CD4-positive, alpha-beta T cell (primary cell): ENCODE measurements at regions of chr1 and their contacts with region 1.

Region 1: DNA sequence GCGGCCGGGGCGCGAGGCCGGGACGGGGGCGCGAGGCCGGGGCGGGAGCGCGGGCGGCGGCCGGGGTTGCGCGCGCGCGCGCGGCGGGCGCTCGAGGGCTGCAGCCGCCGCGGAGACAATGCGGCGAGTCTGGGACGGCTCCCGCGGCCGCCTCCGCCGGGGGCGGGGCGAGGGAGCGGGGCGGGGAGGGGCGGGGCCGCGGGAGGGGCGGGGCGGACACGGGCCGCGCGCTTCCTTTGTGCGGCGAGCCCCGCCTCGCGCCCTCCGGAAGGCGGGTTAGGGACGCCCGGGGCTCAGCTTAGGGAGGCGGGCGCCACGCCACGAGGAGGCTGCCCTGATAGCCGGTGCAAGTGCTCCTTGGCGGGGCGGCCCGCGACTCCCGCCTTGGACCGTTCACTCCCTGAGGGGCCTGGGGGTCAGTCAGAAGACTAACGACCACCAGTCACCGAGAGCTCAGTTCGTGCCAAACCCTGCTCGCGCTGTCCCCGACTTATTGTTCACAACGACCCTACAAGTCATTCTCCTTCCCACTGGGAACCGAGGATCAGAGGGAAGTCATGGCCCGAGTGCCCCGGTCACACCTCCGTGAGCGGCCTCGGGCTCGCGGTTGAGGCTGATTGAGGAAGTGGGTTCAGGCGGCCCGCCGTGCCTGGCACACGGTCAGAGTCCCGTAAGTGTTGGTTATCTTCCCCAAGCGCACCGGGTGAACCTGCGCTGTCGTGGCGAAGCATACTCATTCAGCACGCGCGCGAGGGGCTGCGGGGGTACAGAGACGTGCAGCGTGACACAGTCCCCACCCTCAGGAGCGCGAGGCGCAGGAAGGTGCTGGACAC is 29.1 kb upstream of the A3GALT2 start:
- DNase-seq: peak; percentile 53 to 92 (median 74)
- ATAC-seq: peak; percentile 86
- H3K4me3 ChIP-seq: peak overlapping the region; percentile 90
- H3K4me3 Mint-ChIP-seq: peak overlapping the region; percentile 87
- H3K27ac ChIP-seq: peak overlapping the region in 1 of 2 donors; percentile 56
- H3K27ac Mint-ChIP-seq: peak overlapping the region; percentile 84
- H3K4me1 ChIP-seq: peaks cover 30% of the 10 kb centered on the region
- H3K4me1 Mint-ChIP-seq: peaks cover 46% of the 10 kb centered on the region
- H3K27me3 ChIP-seq: no peaks in the 10 kb centered on the region
- H3K27me3 Mint-ChIP-seq: no peaks in the 10 kb centered on the region
- CTCF ChIP-seq: no peak

Region 2: GRCh38 chr1:33181921-33182341 is 168.1 kb before region 1 on chr1 and contains the start of gene TRIM62:
- CTCF ChIA-PET with region 1: no interaction called
- POLR2A ChIA-PET with region 1: interaction called, 9 read pairs
- intact Hi-C with region 1: loop called in 1 of 2 experiments (anchors 2 kb)
- DNase-seq: peak; percentile 60 to 89 (median 72)
- ATAC-seq: peak; percentile 71
- H3K4me3 ChIP-seq: peak within 1 kb of the TSS; percentile 88
- H3K4me3 Mint-ChIP-seq: peak within 1 kb of the TSS; percentile 93
- H3K27ac ChIP-seq: peak within 1 kb of the TSS in 1 of 2 donors; percentile 30
- H3K27ac Mint-ChIP-seq: peak within 1 kb of the TSS; percentile 62
- H3K4me1 ChIP-seq: peaks cover 23% of the 10 kb centered on the region
- H3K4me1 Mint-ChIP-seq: peaks cover 34% of the 10 kb centered on the region
- H3K27me3 ChIP-seq: peaks cover 0 to 3% of the 10 kb centered on the region in 2 experiments
- H3K27me3 Mint-ChIP-seq: no peaks in the 10 kb centered on the region
- CTCF ChIP-seq: no peak
- total RNA-seq, gene TRIM62: 18.9 to 23.0 TPM

Region 3: DNA sequence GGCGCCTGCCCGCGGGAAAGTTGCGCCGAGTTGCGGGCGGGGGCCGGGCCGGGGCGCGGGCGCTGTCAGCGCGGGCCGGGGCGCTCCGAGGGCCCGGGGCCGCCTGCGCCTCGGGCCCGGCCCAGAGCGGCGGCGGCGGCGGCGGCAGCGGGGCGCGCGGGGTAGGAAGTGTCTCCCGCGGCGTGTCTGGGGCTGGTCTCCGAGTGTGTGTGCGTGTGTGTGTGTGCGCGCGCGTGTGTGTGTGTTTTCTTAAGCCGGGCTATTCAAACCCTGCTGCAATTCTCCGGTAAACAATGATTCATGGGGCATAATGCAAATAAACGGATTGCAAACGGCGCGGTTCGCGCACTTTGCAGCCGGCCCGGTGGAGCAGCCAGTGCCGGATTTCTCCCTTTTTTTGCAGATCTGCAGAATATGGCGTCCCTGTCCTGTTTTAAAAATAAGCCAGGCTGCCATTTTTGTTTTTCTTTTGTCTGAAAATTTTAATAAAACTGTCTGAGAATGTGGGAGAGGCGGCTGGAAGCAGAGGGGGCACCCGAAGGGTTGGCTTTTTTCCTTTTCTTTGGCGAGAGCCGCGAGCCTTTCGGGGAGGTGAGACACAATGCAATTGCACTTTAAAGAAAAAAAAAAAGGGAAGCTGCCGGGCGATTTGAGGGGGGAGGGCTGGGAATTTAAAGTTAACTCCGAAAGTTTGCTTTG is 93.1 kb before region 1 on chr1:
- CTCF ChIA-PET with region 1: no interaction called
- POLR2A ChIA-PET with region 1: no interaction called
- intact Hi-C with region 1: loop called in 1 of 2 experiments (anchors 2 kb)
- DNase-seq: peak; percentile 35 to 79 (median 52)
- ATAC-seq: peak; percentile 68
- H3K4me3 ChIP-seq: peak overlapping the region; percentile 84
- H3K4me3 Mint-ChIP-seq: peak overlapping the region; percentile 97
- H3K27ac ChIP-seq: peak overlapping the region in 1 of 2 donors; percentile 49
- H3K27ac Mint-ChIP-seq: peak overlapping the region; percentile 98
- H3K4me1 ChIP-seq: peaks cover 49% of the 10 kb centered on the region
- H3K4me1 Mint-ChIP-seq: peaks cover 41% of the 10 kb centered on the region
- H3K27me3 ChIP-seq: no peaks in the 10 kb centered on the region
- H3K27me3 Mint-ChIP-seq: no peaks in the 10 kb centered on the region
- CTCF ChIP-seq: no peak

Region 4: GRCh38 chr1:33280091-33280661 is 69.8 kb before region 1 on chr1:
- CTCF ChIA-PET with region 1: no interaction called
- POLR2A ChIA-PET with region 1: no interaction called
- intact Hi-C with region 1: no loop called
- DNase-seq: no peak
- ATAC-seq: no peak
- H3K4me3 ChIP-seq: no peak overlapping the region
- H3K4me3 Mint-ChIP-seq: no peak overlapping the region
- H3K27ac ChIP-seq: no peak overlapping the region
- H3K27ac Mint-ChIP-seq: no peak overlapping the region
- H3K4me1 ChIP-seq: no peaks in the 10 kb centered on the region
- H3K4me1 Mint-ChIP-seq: no peaks in the 10 kb centered on the region
- H3K27me3 ChIP-seq: no peaks in the 10 kb centered on the region
- H3K27me3 Mint-ChIP-seq: no peaks in the 10 kb centered on the region
- CTCF ChIP-seq: no peak

Region 5: GRCh38 chr1:33295450-33296081 is 54.4 kb before region 1 on chr1:
- CTCF ChIA-PET with region 1: no interaction called
- POLR2A ChIA-PET with region 1: interaction called, 11 read pairs
- intact Hi-C with region 1: no loop called
- DNase-seq: peak; percentile 74 to 91 (median 86)
- ATAC-seq: peak; percentile 93
- H3K4me3 ChIP-seq: no peak overlapping the region
- H3K4me3 Mint-ChIP-seq: no peak overlapping the region
- H3K27ac ChIP-seq: no peak overlapping the region
- H3K27ac Mint-ChIP-seq: peak overlapping the region; percentile 58
- H3K4me1 ChIP-seq: peaks cover 15% of the 10 kb centered on the region
- H3K4me1 Mint-ChIP-seq: peaks cover 23% of the 10 kb centered on the region
- H3K27me3 ChIP-seq: no peaks in the 10 kb centered on the region
- H3K27me3 Mint-ChIP-seq: no peaks in the 10 kb centered on the region
- CTCF ChIP-seq: peak; percentile 93

Region 6: DNA sequence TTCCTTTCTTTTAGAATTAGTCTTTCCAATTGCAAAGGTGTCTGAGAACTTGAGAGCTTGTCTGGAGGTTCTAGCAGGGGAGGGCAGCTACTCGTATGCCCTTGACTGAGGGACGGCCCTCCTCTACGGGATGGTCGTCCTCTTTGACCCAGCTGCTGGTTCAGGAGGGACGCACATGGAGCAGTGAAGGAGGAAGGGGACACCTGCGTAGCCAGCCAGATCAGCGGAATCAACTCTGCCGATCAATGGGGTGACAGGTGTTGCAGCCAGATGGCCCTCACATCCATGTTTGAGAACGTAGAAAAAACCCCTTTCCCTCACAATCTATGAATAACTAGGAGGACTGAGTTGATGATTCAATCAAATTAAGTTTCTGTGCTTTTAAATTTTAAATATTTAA is 13.4 kb before region 1 on chr1:
- CTCF ChIA-PET with region 1: no interaction called
- POLR2A ChIA-PET with region 1: interaction called, 10 read pairs
- intact Hi-C with region 1: no loop called
- DNase-seq: no peak
- ATAC-seq: no peak
- H3K4me3 ChIP-seq: no peak overlapping the region
- H3K4me3 Mint-ChIP-seq: no peak overlapping the region
- H3K27ac ChIP-seq: no peak overlapping the region
- H3K27ac Mint-ChIP-seq: no peak overlapping the region
- H3K4me1 ChIP-seq: peaks cover 8% of the 10 kb centered on the region
- H3K4me1 Mint-ChIP-seq: peaks cover 52% of the 10 kb centered on the region
- H3K27me3 ChIP-seq: no peaks in the 10 kb centered on the region
- H3K27me3 Mint-ChIP-seq: no peaks in the 10 kb centered on the region
- CTCF ChIP-seq: no peak

Region 7: DNA sequence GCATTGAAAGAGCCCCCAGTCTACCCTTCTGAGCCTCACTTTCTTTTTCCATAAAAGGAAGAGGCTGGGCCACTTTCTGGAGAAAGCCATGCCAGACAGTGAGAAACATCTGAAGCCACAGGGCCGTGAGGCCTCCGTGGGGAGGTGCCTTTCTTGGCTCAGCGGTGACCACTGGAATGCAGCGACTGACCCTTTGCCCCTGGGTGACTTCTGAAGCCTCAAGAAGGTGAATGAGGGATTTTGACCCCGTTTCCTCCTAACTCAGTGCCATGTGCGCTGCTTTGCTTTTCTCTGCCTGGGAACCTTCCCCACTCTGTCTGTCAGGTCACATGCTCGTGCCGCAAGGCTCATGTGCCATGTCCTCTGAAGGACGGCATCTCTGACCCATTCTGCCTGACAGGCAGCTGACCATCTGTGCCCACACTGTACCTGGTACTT is 15.6 kb after region 1 on chr1:
- CTCF ChIA-PET with region 1: no interaction called
- POLR2A ChIA-PET with region 1: no interaction called
- intact Hi-C with region 1: no loop called
- DNase-seq: no peak
- ATAC-seq: no peak
- H3K4me3 ChIP-seq: no peak overlapping the region
- H3K4me3 Mint-ChIP-seq: no peak overlapping the region
- H3K27ac ChIP-seq: no peak overlapping the region
- H3K27ac Mint-ChIP-seq: no peak overlapping the region
- H3K4me1 ChIP-seq: peaks cover 9% of the 10 kb centered on the region
- H3K4me1 Mint-ChIP-seq: peaks cover 6% of the 10 kb centered on the region
- H3K27me3 ChIP-seq: peaks cover 0 to 4% of the 10 kb centered on the region in 2 experiments
- H3K27me3 Mint-ChIP-seq: no peaks in the 10 kb centered on the region
- CTCF ChIP-seq: no peak

Region 8: DNA sequence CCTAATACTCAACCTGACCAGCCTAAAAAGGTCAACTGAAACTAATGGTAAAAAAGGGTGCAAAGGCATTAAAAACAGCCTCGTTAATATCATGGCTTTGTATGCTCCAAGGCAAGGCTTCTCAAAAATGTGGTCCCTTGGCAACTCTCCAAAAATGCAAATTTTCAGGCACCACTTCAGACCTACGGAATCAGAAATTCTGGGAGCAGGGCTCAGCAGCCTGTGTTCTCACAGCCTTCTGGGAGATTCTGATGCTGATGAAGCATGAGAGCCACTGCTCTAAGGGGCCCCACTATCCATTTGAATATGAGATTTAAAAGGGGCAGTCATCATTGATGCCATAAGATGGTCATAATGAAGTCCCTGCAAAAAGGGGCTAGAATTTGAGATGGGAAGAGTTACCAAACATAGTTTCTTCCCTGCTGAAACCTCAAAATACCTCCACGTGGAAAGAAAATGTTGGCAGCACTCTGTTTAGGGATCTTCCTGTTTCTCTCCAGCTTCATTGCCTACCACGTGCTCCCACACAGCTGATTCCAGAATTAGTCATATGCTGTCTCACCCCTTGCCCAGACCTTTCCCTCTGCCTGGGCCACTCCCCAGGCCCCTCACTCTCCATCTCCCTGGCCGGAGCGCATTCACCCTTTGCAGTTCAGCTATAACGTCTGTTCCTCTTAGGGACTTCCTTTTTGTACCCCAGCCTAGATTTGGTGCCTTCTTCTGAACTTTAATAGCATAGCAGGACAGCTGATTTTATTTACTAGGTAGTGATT is 34.2 kb after region 1 on chr1:
- CTCF ChIA-PET with region 1: no interaction called
- POLR2A ChIA-PET with region 1: no interaction called
- intact Hi-C with region 1: no loop called
- DNase-seq: no peak
- ATAC-seq: no peak
- H3K4me3 ChIP-seq: no peak overlapping the region
- H3K4me3 Mint-ChIP-seq: no peak overlapping the region
- H3K27ac ChIP-seq: no peak overlapping the region
- H3K27ac Mint-ChIP-seq: no peak overlapping the region
- H3K4me1 ChIP-seq: peaks cover 5% of the 10 kb centered on the region
- H3K4me1 Mint-ChIP-seq: peaks cover 15% of the 10 kb centered on the region
- H3K27me3 ChIP-seq: peaks cover 0 to 14% of the 10 kb centered on the region in 2 experiments
- H3K27me3 Mint-ChIP-seq: peaks cover 15% of the 10 kb centered on the region
- CTCF ChIP-seq: no peak